Thyroid gland (tissue), 4 donors: ENCODE measurements at regions of chr4 and their contacts with region 1.

Region 1: DNA sequence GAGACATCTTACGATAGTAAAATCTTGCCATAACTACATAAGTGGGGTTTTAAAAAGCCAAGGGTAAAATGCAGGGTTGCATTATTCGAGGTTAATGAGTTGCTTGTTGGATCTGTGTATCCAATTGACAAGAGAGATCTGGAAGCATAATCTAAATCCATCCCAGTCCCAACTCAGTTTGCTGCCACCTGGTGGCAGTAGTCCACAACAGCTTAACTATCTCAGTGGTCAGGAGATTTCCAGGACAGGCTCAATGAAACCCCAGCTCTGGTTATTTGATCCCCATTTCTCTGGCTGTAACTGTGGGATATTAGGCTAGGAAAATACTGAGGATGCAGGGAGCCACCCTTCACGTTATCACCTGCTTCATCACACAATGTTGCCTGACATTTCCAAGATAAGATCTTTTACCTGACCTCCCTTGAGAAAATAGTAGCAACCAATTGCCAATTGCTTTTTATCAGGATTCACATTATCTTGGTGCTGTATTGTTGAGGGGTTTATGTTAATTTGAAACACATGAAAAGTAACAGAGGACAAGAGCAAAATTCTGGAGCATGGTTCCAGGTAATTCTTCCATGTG is 88.2 kb upstream of the TNIP3 start:
- DNase-seq: peak; percentile 59 to 71
- H3K4me3 ChIP-seq: no peak overlapping the region
- H3K27ac ChIP-seq: no peak overlapping the region
- H3K4me1 ChIP-seq: no peaks in the 10 kb centered on the region
- H3K27me3 ChIP-seq: no peaks in the 10 kb centered on the region
- CTCF ChIP-seq: peak in 5 of 6 experiments; percentile 47 to 83 (median 53)
- POLR2A ChIP-seq: no peak

Region 2: GRCh38 chr4:120156120-120156718 is 1096.1 kb before region 1 on chr4:
- intact Hi-C with region 1: loop called (anchors 10 kb)
- DNase-seq: no peak
- H3K4me3 ChIP-seq: no peak overlapping the region
- H3K27ac ChIP-seq: no peak overlapping the region
- H3K4me1 ChIP-seq: no peaks in the 10 kb centered on the region
- H3K27me3 ChIP-seq: no peaks in the 10 kb centered on the region
- CTCF ChIP-seq: peak in 5 of 6 experiments; percentile 33 to 76 (median 65)
- POLR2A ChIP-seq: no peak

Region 3: DNA sequence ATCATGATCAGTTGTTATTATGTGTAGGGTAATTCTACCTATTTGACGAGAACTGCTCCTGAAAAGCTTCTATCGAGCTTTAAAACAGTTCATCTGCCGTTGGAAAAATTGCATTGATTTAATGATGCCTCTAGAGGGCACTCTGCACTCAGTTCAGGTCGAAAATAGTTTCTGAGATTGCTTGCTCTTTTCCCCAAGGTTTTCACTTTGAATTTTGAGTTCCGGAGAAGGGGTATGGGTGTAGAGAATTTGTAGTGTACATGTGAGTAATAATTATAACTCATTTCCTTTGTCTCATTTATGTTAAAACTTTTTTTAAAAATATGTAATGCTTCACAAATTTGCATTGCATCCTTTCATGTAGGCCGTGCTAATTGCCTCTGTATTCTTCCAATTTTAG is 59.8 kb before region 1 on chr4:
- intact Hi-C with region 1: loop called (anchors 10 kb)
- DNase-seq: no peak
- H3K4me3 ChIP-seq: no peak overlapping the region
- H3K27ac ChIP-seq: no peak overlapping the region
- H3K4me1 ChIP-seq: no peaks in the 10 kb centered on the region
- H3K27me3 ChIP-seq: no peaks in the 10 kb centered on the region
- CTCF ChIP-seq: peak in 4 of 6 experiments; percentile 58 to 75 (median 60)
- POLR2A ChIP-seq: no peak